ENCODE measurements at regions of chr5 and their contacts with region 1.

Region 1: GRCh38 chr5:134101686-134102439 is 12.6 kb upstream of the TCF7 start:
- DNase-seq: peak in 6 of 10 donors; percentile 29 to 68 (median 50)
- H3K4me3 ChIP-seq: peak overlapping the region in 1 of 59 donors; percentile 16
- H3K27ac ChIP-seq: no peak overlapping the region
- H3K27me3 ChIP-seq: no peaks in the 10 kb centered on the region
- CTCF ChIP-seq: peak in 55 of 56 donors; percentile 46 to 83 (median 75)

Region 2: DNA sequence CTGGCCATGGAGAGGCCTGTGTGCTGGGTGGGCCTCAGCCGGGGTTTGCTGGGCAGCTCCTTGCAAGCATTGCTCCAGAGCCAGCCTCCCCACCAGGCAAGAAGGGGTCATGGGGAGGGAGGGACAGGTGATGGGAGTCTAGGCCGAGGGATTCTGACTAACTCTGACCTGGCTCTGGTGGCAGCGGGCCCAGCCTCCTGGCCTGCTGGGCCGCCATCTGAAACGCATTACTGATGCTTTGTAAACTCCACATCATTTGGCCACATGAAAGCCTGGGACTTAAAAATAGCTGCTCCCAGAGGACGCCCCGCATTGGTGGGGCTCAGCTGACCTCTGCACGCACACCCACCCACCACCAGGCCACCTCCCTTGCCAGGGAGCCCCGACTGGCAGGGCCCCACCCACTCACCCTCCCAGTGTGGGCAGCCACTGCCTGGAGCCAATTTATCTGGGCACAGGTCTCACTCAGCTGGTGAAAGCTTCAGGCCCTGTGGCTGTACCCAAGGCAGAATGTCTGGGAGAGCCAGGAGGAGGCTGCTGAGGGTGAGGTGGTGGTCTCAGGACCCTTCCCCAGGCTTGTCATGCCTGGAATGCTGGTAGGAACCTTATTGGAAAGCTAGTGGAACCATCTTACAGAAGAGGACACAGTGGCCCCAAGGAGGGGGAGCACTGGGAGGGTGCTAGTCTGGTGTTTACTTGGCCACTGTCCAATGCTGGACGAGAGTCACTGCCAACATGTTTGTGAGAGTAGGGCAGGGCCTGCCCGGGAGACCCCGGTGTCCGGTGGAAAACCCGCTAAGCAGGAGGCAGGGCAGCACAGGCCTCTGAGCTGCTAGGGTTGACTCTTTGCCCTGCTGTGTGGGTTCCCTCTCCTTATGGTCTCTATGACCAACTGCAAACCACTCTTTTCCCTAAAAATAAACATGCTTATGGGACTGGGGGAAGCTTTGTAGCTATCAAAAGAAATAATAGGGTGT is 23.5 kb after region 1 on chr5:
- intact Hi-C with region 1: no loop called
- DNase-seq: peak in 7 of 10 donors; percentile 37 to 86 (median 51)
- H3K4me3 ChIP-seq: no peak overlapping the region
- H3K27ac ChIP-seq: peak overlapping the region in 51 of 59 donors; percentile 21 to 86 (median 59)
- H3K27me3 ChIP-seq: no peaks in the 10 kb centered on the region
- CTCF ChIP-seq: no peak

Region 3: GRCh38 chr5:134145779-134146581 is 44.1 kb after region 1 on chr5:
- intact Hi-C with region 1: loop called in 1 of 2 experiments (anchors 2 kb)
- DNase-seq: peak; percentile 75 to 90 (median 86)
- H3K4me3 ChIP-seq: no peak overlapping the region
- H3K27ac ChIP-seq: peak overlapping the region in 32 of 59 donors; percentile 7 to 66 (median 41)
- H3K27me3 ChIP-seq: no peaks in the 10 kb centered on the region
- CTCF ChIP-seq: peak; percentile 75 to 99 (median 96)

Region 4: DNA sequence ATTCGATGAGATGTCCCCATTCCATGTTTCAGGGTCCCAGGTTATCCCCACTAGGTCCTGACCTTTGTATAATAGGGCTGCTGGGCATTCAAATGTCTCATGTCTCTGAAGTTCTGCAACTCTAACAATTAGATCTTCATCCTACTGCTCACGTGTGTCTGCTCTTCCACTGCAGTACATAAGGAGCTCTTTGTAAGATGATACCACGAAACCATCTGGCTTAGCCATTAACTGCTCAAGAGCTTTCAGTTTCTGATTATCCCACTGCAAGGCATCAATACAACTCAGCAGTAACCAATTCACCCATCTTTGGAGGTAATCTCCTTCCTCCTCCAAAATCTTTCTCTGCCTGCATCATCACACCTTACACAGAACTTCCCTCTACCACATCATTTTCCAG is 174.0 kb after region 1 on chr5:
- intact Hi-C with region 1: no loop called
- DNase-seq: no peak
- H3K4me3 ChIP-seq: no peak overlapping the region
- H3K27ac ChIP-seq: no peak overlapping the region
- H3K27me3 ChIP-seq: no peaks in the 10 kb centered on the region
- CTCF ChIP-seq: no peak

Region 5: DNA sequence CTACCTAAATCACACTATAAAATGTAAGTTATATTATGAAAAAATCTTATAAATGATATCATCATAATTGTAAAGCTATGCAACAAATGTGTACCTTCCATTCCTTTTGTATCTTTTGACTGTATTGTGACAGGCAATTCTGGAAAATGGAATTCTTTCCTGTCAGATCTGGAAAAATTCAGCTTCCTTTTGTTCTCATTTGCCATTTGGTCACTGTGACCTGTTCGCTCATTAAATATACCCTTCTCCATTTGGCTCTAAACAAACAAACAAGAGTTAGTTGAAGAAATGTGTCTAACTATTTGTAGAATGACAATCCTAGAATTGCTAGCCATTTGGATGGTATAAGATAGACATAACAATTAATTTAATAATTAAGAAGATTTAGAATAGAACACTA is 202.4 kb after region 1 on chr5:
- intact Hi-C with region 1: no loop called
- DNase-seq: no peak
- H3K4me3 ChIP-seq: no peak overlapping the region
- H3K27ac ChIP-seq: no peak overlapping the region
- H3K27me3 ChIP-seq: no peaks in the 10 kb centered on the region
- CTCF ChIP-seq: no peak